ENCODE measurements at regions of chr2 and their contacts with region 1.

Region 1: GRCh38 chr2:130372055-130372832 is 16.4 kb downstream of the PTPN18 start:
- H3K4me3 Mint-ChIP-seq: peak overlapping the region; percentile 95
- H3K27ac Mint-ChIP-seq: peak overlapping the region; percentile 98
- H3K4me1 Mint-ChIP-seq: peaks cover 90% of the 10 kb centered on the region
- H3K27me3 Mint-ChIP-seq: no peaks in the 10 kb centered on the region

Region 2: GRCh38 chr2:130252880-130253645 is 119.2 kb before region 1 on chr2:
- intact Hi-C with region 1: no loop called
- H3K4me3 Mint-ChIP-seq: no peak overlapping the region
- H3K27ac Mint-ChIP-seq: no peak overlapping the region
- H3K4me1 Mint-ChIP-seq: no peaks in the 10 kb centered on the region
- H3K27me3 Mint-ChIP-seq: peaks cover 40% of the 10 kb centered on the region

Region 3: DNA sequence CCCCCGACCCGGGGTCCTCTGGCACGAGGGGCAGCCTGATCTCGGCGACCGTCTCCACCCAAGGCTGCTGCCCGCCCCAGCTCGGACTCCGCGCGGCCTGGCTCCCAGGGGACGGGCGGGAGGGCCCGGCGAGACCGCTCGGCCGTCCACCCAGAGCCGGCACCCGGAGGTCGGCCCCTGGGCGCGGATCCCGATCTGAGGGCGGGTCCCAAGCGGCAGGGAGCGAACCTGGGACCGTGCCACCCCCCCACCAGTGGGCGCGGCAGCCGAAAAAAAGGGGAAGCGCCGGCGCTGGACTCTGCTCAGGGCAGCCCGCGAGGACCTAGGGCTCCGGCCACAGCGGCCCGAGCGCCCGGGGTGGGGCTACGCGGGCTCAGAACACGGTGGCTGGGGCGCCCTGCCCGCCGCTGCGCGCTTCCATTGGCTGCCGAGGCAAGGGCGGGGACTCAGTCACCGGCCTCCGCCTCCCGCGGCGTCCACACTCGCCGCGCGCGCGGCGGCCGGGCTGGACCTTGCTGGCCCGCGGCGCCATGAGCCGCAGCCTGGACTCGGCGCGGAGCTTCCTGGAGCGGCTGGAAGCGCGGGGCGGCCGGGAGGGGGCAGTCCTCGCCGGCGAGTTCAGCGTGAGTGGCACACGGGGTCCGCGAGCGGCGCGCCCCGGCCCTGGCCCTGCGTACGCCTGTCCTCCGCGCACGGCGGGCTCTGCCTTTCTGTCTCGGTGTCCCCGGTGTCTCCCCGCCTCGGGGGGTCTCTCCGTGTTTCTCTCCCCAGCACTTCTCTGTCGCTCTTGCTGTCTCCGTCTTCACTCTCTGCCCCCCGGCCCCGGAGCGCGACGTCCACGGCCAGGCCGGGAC is 16.4 kb before region 1 on chr2 and contains the start of gene PTPN18:
- intact Hi-C with region 1: loop called (anchors 1 kb)
- H3K4me3 Mint-ChIP-seq: peak within 1 kb of the TSS; percentile 93
- H3K27ac Mint-ChIP-seq: peak within 1 kb of the TSS; percentile 94
- H3K4me1 Mint-ChIP-seq: peaks cover 68% of the 10 kb centered on the region
- H3K27me3 Mint-ChIP-seq: no peaks in the 10 kb centered on the region

Region 4: GRCh38 chr2:130391058-130391871 is 19.0 kb after region 1 on chr2:
- intact Hi-C with region 1: loop called (anchors 1 kb)
- H3K4me3 Mint-ChIP-seq: peak overlapping the region; percentile 85
- H3K27ac Mint-ChIP-seq: peak overlapping the region; percentile 98
- H3K4me1 Mint-ChIP-seq: peaks cover 63% of the 10 kb centered on the region
- H3K27me3 Mint-ChIP-seq: no peaks in the 10 kb centered on the region